ENCODE measurements at regions of chrX and their contacts with region 1.

Region 1: DNA sequence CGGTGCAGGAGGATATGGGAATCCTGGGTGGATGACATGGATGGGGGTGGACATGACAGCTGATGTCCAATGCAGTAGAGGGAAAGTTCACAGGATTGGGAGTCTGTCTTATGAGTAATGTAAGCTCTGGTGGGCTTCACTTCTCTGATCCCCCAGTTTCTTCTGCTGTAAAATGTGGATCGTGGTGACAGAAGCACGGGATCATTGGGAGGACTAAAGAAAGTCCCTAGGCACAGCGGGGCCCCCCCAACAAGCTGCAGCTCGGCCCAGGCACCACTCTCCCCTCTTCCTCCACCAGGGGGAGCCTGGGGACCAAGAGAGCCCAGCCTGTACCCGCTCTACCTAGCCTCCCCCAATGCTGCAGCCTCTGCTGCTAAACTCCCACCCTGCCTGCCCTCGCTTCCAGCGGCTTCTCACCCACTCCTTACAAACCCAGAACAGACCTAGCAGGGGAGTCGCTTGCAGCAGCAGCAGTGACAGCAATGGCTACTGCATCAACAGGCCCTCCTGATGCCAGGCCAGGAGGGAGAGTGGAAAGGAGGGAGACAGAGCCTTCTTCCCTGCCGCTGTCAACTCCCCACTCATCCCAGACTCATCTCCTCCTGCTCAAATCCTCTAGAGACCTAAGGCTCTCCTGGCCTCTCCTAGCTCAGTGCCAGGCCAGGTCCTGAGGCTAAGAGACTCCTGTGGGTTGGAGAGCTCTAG is 36.1 kb upstream of the IQSEC2 start:
- DNase-seq: peak; percentile 54
- ATAC-seq: peak; percentile 60
- H3K4me3 ChIP-seq: no peak overlapping the region
- H3K27ac ChIP-seq: no peak overlapping the region
- H3K4me1 ChIP-seq: peaks cover 19% of the 10 kb centered on the region
- H3K27me3 ChIP-seq: peaks cover 17% of the 10 kb centered on the region
- CTCF ChIP-seq: peak; percentile 79

Region 2: GRCh38 chrX:53122013-53122412 is 195.5 kb before region 1 on chrX:
- CTCF ChIA-PET with region 1: no interaction called
- POLR2A ChIA-PET with region 1: no interaction called
- intact Hi-C with region 1: no loop called
- DNase-seq: no peak
- ATAC-seq: no peak
- H3K4me3 ChIP-seq: no peak overlapping the region
- H3K27ac ChIP-seq: no peak overlapping the region
- H3K4me1 ChIP-seq: peaks cover 12% of the 10 kb centered on the region; the same call in 1 of the 2 replicates
- H3K27me3 ChIP-seq: no peaks in the 10 kb centered on the region
- CTCF ChIP-seq: no peak

Region 3: DNA sequence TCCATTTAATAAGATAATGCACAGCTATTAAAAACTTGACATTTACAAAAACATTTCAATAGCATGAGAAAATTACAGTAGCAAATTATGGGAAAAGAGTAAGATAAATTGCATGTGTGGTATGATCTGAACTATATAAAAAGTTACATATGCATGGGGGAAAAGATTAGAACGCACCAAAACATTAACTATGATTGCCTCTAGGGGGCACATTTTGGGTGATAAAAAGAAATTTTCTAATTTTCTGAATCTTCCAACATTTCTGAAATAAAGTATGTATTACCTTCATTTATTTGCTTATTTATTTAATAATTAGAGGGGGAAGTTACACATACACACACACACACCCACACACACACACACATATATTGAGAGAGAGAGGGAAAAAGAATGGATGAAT is 72.9 kb before region 1 on chrX:
- CTCF ChIA-PET with region 1: no interaction called
- POLR2A ChIA-PET with region 1: no interaction called
- intact Hi-C with region 1: loop called (anchors 5 kb)
- DNase-seq: peak; percentile 22
- ATAC-seq: no peak
- H3K4me3 ChIP-seq: no peak overlapping the region
- H3K27ac ChIP-seq: no peak overlapping the region
- H3K4me1 ChIP-seq: no peaks in the 10 kb centered on the region; the same call in 1 of the 2 replicates
- H3K27me3 ChIP-seq: no peaks in the 10 kb centered on the region
- CTCF ChIP-seq: peak; percentile 62

Region 4: GRCh38 chrX:53433651-53434639 is 116.4 kb after region 1 on chrX and contains the start of gene HSD17B10:
- CTCF ChIA-PET with region 1: interaction called, 5 read pairs
- POLR2A ChIA-PET with region 1: no interaction called
- intact Hi-C with region 1: loop called (anchors 2 kb)
- DNase-seq: peak; percentile 90
- ATAC-seq: peak; percentile 98
- H3K4me3 ChIP-seq: peak within 1 kb of the TSS; percentile 97
- H3K27ac ChIP-seq: no peak within 1 kb of the TSS
- H3K4me1 ChIP-seq: peaks cover 7% of the 10 kb centered on the region; the same call in 1 of the 2 replicates
- H3K27me3 ChIP-seq: no peaks in the 10 kb centered on the region
- CTCF ChIP-seq: no peak
- total RNA-seq, gene HSD17B10: 181 and 191 TPM in 2 replicates